CD4-positive, alpha-beta memory T cell (primary cell): ENCODE measurements at regions of chr2 and their contacts with region 1.

Region 1: GRCh38 chr2:17672583-17673317 is 80.9 kb downstream of the SMC6 start:
- DNase-seq: no peak
- H3K4me3 ChIP-seq: no peak overlapping the region
- H3K4me3 Mint-ChIP-seq: no peak overlapping the region
- H3K27ac ChIP-seq: no peak overlapping the region
- H3K27ac Mint-ChIP-seq: peak overlapping the region in 2 of 7 donors; percentile 29 to 45
- H3K4me1 ChIP-seq: no peaks in the 10 kb centered on the region
- H3K4me1 Mint-ChIP-seq: peaks cover 0 to 4% (median 1%) of the 10 kb centered on the region in 4 donors
- H3K27me3 ChIP-seq: no peaks in the 10 kb centered on the region
- H3K27me3 Mint-ChIP-seq: no peaks in the 10 kb centered on the region

Region 2: DNA sequence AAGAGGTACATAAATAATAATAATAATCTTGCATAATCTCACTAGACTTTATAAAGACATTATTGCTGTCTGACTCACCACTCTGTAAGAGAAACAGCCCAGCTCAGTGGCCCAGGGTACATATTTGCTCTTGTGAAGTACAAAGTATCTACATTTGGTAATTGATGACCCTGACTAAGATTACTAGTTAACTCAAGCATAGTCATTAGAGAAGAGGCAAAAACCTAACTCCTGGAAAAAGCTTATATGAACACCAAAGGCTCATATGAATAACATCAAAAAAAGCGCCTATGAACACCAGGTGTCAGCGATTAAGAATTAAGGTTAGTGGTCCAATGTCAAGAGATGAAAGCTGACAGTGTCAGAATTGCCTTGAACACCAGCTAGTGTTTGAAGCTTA is 192.9 kb before region 1 on chr2:
- CTCF ChIA-PET with region 1: no interaction called
- POLR2A ChIA-PET with region 1: no interaction called
- intact Hi-C with region 1: no loop called
- DNase-seq: no peak
- H3K4me3 ChIP-seq: no peak overlapping the region
- H3K4me3 Mint-ChIP-seq: no peak overlapping the region
- H3K27ac ChIP-seq: no peak overlapping the region
- H3K27ac Mint-ChIP-seq: no peak overlapping the region
- H3K4me1 ChIP-seq: no peaks in the 10 kb centered on the region
- H3K4me1 Mint-ChIP-seq: no peaks in the 10 kb centered on the region
- H3K27me3 ChIP-seq: no peaks in the 10 kb centered on the region
- H3K27me3 Mint-ChIP-seq: no peaks in the 10 kb centered on the region

Region 3: GRCh38 chr2:17550907-17551306 is 121.8 kb before region 1 on chr2:
- CTCF ChIA-PET with region 1: no interaction called
- POLR2A ChIA-PET with region 1: no interaction called
- intact Hi-C with region 1: no loop called
- DNase-seq: no peak
- H3K4me3 ChIP-seq: no peak overlapping the region
- H3K4me3 Mint-ChIP-seq: no peak overlapping the region
- H3K27ac ChIP-seq: no peak overlapping the region
- H3K27ac Mint-ChIP-seq: no peak overlapping the region
- H3K4me1 ChIP-seq: no peaks in the 10 kb centered on the region
- H3K4me1 Mint-ChIP-seq: no peaks in the 10 kb centered on the region
- H3K27me3 ChIP-seq: no peaks in the 10 kb centered on the region
- H3K27me3 Mint-ChIP-seq: peaks cover 2 to 6% of the 10 kb centered on the region in 2 donors

Region 4: DNA sequence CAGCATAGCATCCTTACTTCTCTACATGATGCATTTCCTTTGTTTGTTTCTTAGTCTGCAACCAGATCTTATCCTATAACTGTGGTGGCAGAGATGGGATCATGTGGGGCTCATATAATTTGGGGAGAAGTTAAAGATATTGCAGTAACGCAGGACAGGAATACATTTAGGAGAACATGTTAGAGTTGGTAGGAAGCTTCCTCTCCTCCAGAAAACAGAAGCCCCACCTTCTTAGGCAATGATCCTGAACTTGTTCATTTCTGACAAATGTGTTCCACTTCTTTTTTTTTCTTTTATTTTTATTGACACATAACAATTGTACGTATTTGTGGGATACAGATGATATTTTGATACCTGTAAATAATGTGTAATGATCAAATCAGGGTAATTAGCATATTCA is 32.3 kb before region 1 on chr2:
- CTCF ChIA-PET with region 1: interaction called, 142 read pairs
- POLR2A ChIA-PET with region 1: interaction called, 5 read pairs
- intact Hi-C with region 1: no loop called
- DNase-seq: no peak
- H3K4me3 ChIP-seq: no peak overlapping the region
- H3K4me3 Mint-ChIP-seq: no peak overlapping the region
- H3K27ac ChIP-seq: no peak overlapping the region
- H3K27ac Mint-ChIP-seq: peak overlapping the region in 1 of 7 donors; percentile 4
- H3K4me1 ChIP-seq: no peaks in the 10 kb centered on the region
- H3K4me1 Mint-ChIP-seq: no peaks in the 10 kb centered on the region
- H3K27me3 ChIP-seq: no peaks in the 10 kb centered on the region
- H3K27me3 Mint-ChIP-seq: peaks cover 1% of the 10 kb centered on the region in 2 donors

Region 5: GRCh38 chr2:17658251-17658843 is 14.4 kb before region 1 on chr2:
- CTCF ChIA-PET with region 1: interaction called, 59 read pairs
- POLR2A ChIA-PET with region 1: no interaction called
- intact Hi-C with region 1: no loop called
- DNase-seq: no peak
- H3K4me3 ChIP-seq: no peak overlapping the region
- H3K4me3 Mint-ChIP-seq: no peak overlapping the region
- H3K27ac ChIP-seq: no peak overlapping the region
- H3K27ac Mint-ChIP-seq: peak overlapping the region in 1 of 7 donors; percentile 14
- H3K4me1 ChIP-seq: no peaks in the 10 kb centered on the region
- H3K4me1 Mint-ChIP-seq: peaks cover 0 to 3% (median 0%) of the 10 kb centered on the region in 4 donors
- H3K27me3 ChIP-seq: no peaks in the 10 kb centered on the region
- H3K27me3 Mint-ChIP-seq: no peaks in the 10 kb centered on the region

Region 6: DNA sequence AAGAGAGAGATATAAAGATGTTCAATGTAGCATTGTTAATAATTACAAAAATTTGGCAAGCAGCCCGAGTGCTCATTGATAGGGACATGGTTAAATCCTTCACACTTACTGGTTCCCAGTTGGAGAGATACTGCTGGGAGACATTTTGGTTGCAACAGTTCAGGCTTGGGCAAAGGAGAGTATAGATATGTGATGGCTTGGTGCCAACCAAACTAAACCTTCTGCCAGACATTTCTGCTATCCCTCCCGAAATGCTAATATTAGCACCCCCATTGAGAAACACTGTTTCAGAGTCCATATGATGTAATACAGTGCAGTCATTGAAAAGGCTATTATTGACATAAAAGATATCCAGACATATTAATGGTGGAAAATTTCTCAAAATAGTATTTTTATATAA is 92.7 kb after region 1 on chr2:
- CTCF ChIA-PET with region 1: no interaction called
- POLR2A ChIA-PET with region 1: no interaction called
- intact Hi-C with region 1: no loop called
- DNase-seq: no peak
- H3K4me3 ChIP-seq: no peak overlapping the region
- H3K4me3 Mint-ChIP-seq: no peak overlapping the region
- H3K27ac ChIP-seq: no peak overlapping the region
- H3K27ac Mint-ChIP-seq: no peak overlapping the region
- H3K4me1 ChIP-seq: no peaks in the 10 kb centered on the region
- H3K4me1 Mint-ChIP-seq: no peaks in the 10 kb centered on the region
- H3K27me3 ChIP-seq: no peaks in the 10 kb centered on the region
- H3K27me3 Mint-ChIP-seq: no peaks in the 10 kb centered on the region